ENCODE measurements at regions of chr2 and their contacts with region 1.

Region 1: DNA sequence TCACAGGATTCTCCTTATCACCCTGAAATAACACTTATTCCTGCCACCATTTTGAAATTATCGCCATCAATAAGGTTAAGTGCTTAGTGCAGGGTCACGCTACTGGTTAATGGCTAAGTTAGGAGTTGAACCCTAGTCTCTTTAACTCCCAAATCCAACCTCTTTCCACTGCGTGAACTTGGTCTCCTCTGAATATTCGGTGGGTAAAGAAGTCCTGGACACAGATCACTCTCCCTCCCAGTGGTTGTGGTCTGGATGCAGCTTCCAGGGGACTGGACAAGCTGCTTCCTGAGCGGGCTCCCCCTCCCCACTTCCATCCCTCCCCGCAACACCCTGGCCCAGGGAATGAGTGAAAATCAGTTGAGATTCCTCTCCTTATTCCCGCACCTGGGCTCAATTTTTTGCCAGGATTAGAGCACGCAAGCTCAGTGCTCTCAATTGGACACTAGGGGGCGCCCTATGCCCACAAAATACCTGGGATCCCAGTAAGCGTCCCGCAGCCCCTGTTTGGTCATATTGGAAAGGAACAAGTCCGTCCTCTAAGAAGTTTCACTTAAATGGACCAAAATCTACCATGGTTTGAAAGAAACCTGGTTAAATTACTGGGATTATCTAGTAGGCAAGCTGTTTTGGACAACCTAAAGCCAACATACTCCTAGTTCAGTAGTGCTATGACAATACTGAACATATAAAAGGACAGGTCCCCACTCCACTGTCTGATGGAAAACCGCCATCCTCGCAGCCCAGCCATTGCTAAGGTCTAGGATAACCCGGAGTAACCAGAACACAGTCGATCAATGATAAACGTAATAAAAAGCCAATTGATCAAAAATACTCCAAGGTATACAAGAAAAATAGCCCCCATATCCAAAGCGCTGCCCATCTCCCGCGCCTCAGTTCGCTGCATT is 40.4 kb downstream of the DHRS9 start:
- DNase-seq: peak; percentile 85
- ATAC-seq: peak; percentile 28
- H3K4me3 Mint-ChIP-seq: no peak overlapping the region
- H3K27ac Mint-ChIP-seq: peak overlapping the region; percentile 43
- H3K4me1 Mint-ChIP-seq: peaks cover 53% of the 10 kb centered on the region
- H3K27me3 Mint-ChIP-seq: no peaks in the 10 kb centered on the region

Region 2: GRCh38 chr2:168626096-168626495 is 483.7 kb before region 1 on chr2:
- CTCF ChIA-PET with region 1: no interaction called
- POLR2A ChIA-PET with region 1: no interaction called
- DNase-seq: no peak
- ATAC-seq: no peak
- H3K4me3 Mint-ChIP-seq: no peak overlapping the region
- H3K27ac Mint-ChIP-seq: no peak overlapping the region
- H3K4me1 Mint-ChIP-seq: peaks cover 5% of the 10 kb centered on the region
- H3K27me3 Mint-ChIP-seq: no peaks in the 10 kb centered on the region

Region 3: GRCh38 chr2:168971261-168971660 is 138.5 kb before region 1 on chr2:
- CTCF ChIA-PET with region 1: interaction called, 101 read pairs
- POLR2A ChIA-PET with region 1: no interaction called
- DNase-seq: no peak
- ATAC-seq: no peak
- H3K4me3 Mint-ChIP-seq: no peak overlapping the region
- H3K27ac Mint-ChIP-seq: no peak overlapping the region
- H3K4me1 Mint-ChIP-seq: no peaks in the 10 kb centered on the region
- H3K27me3 Mint-ChIP-seq: no peaks in the 10 kb centered on the region

Region 4: DNA sequence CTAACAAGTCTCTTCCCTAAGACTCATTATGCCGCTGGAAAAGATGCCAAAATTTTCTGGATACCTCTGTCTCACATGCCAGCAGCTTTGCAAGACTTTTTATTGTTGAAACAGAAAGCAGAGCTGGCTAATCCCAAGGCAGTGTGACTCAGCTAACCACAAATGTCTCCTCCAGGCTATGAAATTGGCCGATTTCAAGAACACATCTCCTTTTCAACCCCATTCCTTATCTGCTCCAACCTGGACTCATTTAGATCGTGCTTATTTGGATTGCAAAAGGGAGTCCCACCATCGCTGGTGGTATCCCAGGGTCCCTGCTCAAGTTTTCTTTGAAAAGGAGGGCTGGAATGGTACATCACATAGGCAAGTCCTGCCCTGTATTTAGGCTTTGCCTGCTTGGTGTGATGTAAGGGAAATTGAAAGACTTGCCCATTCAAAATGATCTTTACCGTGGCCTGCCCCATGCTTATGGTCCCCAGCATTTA is 14.1 kb before region 1 on chr2:
- CTCF ChIA-PET with region 1: interaction called, 54 read pairs
- POLR2A ChIA-PET with region 1: interaction called, 4 read pairs
- DNase-seq: peak; percentile 29
- ATAC-seq: peak; percentile 70
- H3K4me3 Mint-ChIP-seq: no peak overlapping the region
- H3K27ac Mint-ChIP-seq: peak overlapping the region; percentile 21
- H3K4me1 Mint-ChIP-seq: peaks cover 30% of the 10 kb centered on the region
- H3K27me3 Mint-ChIP-seq: peaks cover 2% of the 10 kb centered on the region

Region 5: DNA sequence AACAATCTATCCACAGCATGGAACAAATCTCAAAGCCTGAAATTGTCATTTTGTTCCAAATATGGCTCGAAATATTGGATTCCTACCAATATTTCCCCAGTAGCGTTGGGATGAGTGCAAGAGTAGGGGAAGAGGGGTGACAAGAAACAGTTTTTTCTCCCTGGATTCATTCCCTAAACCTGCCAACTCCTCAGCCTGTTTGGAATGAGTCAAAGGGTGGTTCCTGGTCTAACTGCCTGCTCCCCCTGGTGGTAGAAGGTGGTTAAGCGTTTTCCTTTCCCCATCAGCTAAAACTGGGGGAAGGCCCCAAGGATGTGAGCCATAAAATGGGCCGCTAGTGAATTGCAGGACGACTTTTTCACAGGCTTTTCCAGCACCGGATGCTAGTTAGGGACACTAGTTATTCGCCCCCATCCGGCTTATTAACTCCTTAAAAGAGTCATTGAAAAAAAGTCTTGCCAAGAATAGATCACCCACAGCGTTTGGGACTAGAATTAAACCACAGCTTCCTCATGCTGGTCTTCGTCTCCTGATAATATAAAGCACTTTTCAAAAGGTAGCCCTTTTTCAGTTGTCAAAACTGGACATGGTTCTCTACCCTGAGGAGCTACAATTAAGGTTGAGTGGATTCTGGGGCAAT is 32.1 kb after region 1 on chr2:
- CTCF ChIA-PET with region 1: interaction called, 181 read pairs
- POLR2A ChIA-PET with region 1: no interaction called
- DNase-seq: peak; percentile 73
- ATAC-seq: peak; percentile 57
- H3K4me3 Mint-ChIP-seq: no peak overlapping the region
- H3K27ac Mint-ChIP-seq: no peak overlapping the region
- H3K4me1 Mint-ChIP-seq: no peaks in the 10 kb centered on the region
- H3K27me3 Mint-ChIP-seq: peaks cover 2% of the 10 kb centered on the region

Region 6: GRCh38 chr2:169609264-169609663 is 499.5 kb after region 1 on chr2:
- CTCF ChIA-PET with region 1: no interaction called
- POLR2A ChIA-PET with region 1: no interaction called
- DNase-seq: no peak
- ATAC-seq: no peak
- H3K4me3 Mint-ChIP-seq: no peak overlapping the region
- H3K27ac Mint-ChIP-seq: no peak overlapping the region
- H3K4me1 Mint-ChIP-seq: no peaks in the 10 kb centered on the region
- H3K27me3 Mint-ChIP-seq: no peaks in the 10 kb centered on the region

Measured in activated CD8-positive, alpha-beta T cell treated with anti-CD3 and anti-CD28 coated beads, Interleukin-2, amount 10 ng/mL, durations not matched to agents 7 days and 5 days (primary cell).